Left colon (tissue), 2 donors: ENCODE measurements at regions of chr7 and their contacts with region 1.

Region 1: GRCh38 chr7:83655951-83656556 is 7.1 kb upstream of the SEMA3E start:
- DNase-seq: peak in 1 of 2 donors; percentile 12
- ATAC-seq: peak; percentile 61

Region 2: GRCh38 chr7:83410989-83411591 is 245.0 kb before region 1 on chr7:
- intact Hi-C with region 1: loop called in 1 of 2 experiments (anchors 5 kb)
- DNase-seq: peak in 1 of 2 donors; percentile 13
- ATAC-seq: peak; percentile 42